Colonic mucosa (tissue), 4 donors: ENCODE measurements at regions of chr11 and their contacts with region 1.

Region 1: GRCh38 chr11:34366522-34366921 is 8.7 kb upstream of the ABTB2 start:
- DNase-seq: no peak
- H3K4me3 ChIP-seq: no peak overlapping the region
- H3K27ac ChIP-seq: no peak overlapping the region
- H3K4me1 ChIP-seq: no peaks in the 10 kb centered on the region
- H3K27me3 ChIP-seq: no peaks in the 10 kb centered on the region
- CTCF ChIP-seq: peak; percentile 35

Region 2: GRCh38 chr11:33996498-33997454 is 369.7 kb before region 1 on chr11:
- intact Hi-C with region 1: loop called (anchors 5 kb)
- DNase-seq: peak; percentile 89
- H3K4me3 ChIP-seq: no peak overlapping the region
- H3K27ac ChIP-seq: no peak overlapping the region
- H3K4me1 ChIP-seq: no peaks in the 10 kb centered on the region
- H3K27me3 ChIP-seq: no peaks in the 10 kb centered on the region
- CTCF ChIP-seq: peak; percentile 82

Region 3: DNA sequence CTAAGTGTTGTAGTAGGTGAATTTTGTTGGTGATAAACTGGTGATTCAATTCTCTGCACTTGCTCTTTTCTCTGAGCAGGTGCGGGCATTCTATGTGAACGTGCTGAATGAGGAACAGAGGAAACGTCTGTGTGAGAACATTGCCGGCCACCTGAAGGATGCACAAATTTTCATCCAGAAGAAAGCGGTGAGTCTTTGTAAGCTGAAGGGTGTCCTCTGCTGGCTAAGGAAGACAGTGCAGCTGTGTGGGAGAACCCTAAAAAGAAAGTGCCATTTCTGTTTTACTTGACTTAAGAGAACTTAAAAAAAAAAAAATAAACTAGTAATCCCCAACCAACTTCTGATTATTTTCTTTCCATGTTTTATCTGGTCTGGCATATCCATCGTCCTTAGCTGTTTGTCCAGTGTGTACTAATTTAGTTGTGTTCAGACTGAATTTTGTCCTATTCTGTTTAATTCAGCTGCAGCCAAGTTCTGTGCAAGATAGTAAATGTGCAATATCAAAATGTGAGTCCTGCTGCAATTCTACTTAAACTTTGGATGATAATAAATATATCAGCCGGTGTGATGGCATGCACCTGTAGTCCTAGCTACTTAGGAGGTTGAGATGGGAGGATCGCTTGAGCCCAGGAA is 101.8 kb after region 1 on chr11:
- intact Hi-C with region 1: loop called (anchors 10 kb)
- DNase-seq: peak; percentile 35
- H3K4me3 ChIP-seq: no peak overlapping the region
- H3K27ac ChIP-seq: no peak overlapping the region
- H3K4me1 ChIP-seq: no peaks in the 10 kb centered on the region
- H3K27me3 ChIP-seq: no peaks in the 10 kb centered on the region
- CTCF ChIP-seq: peak; percentile 63

Region 4: GRCh38 chr11:34492806-34493414 is 126.4 kb after region 1 on chr11:
- intact Hi-C with region 1: loop called (anchors 5 kb)
- DNase-seq: peak; percentile 66
- H3K4me3 ChIP-seq: no peak overlapping the region
- H3K27ac ChIP-seq: no peak overlapping the region
- H3K4me1 ChIP-seq: no peaks in the 10 kb centered on the region
- H3K27me3 ChIP-seq: no peaks in the 10 kb centered on the region
- CTCF ChIP-seq: peak; percentile 57